ENCODE measurements at regions of chr14 and their contacts with region 1.

Region 1: DNA sequence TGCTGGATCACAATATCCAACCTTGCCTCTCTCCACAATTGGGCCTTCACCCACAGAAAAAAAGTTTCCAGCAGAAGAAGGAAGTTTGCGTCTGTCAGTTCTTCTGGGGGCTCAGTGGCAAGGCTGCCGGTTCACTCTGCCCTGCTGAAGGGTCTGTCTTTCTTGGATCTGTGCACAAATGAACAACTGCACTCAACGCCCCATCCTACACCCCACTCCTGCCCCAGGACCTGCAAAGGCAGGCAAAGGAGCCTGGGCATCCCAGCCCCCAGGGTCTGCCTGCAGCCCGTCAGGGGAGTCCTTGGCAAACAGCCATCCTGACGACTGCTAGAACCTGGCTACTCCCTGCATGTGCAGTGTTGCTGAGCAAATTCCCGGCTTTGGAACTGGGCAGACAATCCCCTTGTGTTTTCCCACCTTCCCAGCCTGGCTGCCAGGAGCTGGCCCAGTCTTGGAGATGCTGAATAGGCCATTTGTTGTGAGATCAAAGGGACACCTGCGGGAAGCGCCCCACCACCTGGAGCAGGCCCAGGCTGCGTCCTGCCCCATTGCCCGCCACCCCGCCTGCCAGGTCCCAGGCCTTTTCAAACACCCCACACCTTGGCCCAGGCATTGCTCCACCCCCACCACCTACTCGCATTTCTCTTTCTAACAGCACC is 311.9 kb downstream of the BCL11B start:
- DNase-seq: peak; percentile 68

Region 2: DNA sequence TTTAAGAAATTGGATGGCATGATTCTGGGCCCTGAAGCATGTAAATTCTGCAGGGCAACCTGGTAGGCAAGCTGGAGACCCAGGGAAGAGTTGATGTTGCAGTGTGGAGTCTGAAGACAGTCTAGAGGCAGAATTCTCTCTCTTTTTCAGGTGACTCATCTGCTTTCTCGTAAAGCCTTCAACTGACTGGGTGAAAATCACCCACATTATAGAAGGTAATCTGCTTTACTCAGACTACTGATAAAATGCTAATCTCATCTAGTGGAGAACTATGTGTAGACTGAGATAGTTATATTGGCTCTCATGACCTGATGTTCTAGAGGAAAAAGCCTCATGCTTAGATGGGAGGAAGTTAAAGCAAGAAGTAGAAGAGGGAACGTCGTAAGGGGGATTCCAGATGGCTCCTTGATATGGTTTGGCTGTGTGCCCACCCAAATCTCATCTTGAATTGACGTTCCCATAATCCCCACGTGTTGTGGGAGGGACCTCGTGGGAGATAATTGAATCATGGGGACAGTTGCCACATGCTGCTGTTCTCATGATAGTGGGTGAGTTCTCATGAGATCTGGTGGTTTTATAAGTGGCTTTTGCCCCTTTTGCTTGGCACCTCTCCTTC is 411.9 kb before region 1 on chr14:
- intact Hi-C with region 1: no loop called
- DNase-seq: no peak

Region 3: GRCh38 chr14:98573082-98573481 is 387.0 kb before region 1 on chr14:
- intact Hi-C with region 1: no loop called
- DNase-seq: no peak

Region 4: DNA sequence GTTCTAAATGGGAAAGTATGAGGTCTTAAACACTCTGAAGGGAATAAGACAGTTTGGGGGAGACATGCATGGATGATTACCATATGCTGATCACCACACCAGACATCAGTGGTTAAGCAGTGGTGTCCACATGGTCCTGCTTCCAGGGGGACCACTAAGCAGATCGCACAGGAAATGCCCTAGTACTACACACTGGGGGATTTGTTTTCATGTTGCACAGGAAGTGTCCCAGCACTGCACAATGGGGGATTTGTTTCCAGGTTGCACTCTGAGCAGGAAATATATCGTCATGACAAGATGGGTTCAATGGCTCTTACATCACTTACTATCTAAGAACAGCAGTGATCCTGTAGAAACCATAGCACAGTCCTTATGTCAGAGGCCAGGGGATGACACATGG is 66.4 kb after region 1 on chr14:
- intact Hi-C with region 1: loop called in 1 of 2 experiments (anchors 10 kb)
- DNase-seq: no peak